BJ (cell line): ENCODE measurements at regions of chr1 and their contacts with region 1.

Region 1: DNA sequence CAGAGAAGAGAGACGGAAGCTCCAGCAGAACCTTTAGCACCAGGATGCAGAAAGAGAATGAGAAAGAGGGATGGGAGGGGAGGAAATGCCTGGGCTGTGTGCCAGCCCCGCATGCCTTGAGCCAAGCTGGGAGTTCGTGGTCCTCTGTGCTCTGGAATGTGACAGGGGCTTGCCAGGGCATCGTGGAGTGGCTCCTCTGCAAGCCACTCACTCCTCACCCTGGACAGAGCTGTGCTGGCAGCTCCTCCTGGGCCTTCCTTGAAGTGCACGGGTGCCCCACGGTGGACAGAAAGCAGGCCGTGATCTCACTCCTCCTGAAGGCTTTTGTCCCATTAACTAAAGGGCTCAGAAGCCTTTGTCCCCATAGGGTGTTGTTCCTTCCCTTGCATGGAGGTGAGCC is 34.8 kb upstream of the PRELP start:
- DNase-seq: no peak
- H3K4me3 ChIP-seq: no peak overlapping the region
- H3K27me3 ChIP-seq: no peaks in the 10 kb centered on the region
- CTCF ChIP-seq: peak; percentile 68

Region 2: GRCh38 chr1:203368624-203369451 is 71.9 kb before region 1 on chr1:
- CTCF ChIA-PET with region 1: interaction called, 39 read pairs
- POLR2A ChIA-PET with region 1: no interaction called
- DNase-seq: peak; percentile 61
- H3K4me3 ChIP-seq: no peak overlapping the region
- H3K27me3 ChIP-seq: peaks cover 7% of the 10 kb centered on the region
- CTCF ChIP-seq: peak; percentile 59

Region 3: DNA sequence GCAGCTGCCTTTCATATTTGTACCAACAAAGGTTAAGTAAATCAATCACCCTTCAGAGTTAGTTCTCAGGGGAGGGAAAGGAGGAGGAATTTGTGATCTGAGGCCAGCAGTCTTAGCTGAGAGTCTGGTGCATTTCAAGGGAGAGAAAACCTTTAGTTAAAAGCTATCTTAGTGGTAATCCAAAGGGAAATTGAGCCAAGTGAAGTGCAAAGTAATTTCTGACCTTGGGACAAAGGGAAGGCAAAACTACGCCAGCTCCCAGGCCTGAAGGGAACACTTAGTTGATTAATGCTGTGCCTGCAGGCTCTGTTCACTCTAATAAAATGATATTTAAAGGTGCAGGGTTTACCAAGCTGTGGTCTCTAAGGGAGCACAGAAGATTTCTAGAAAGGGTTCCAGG is 66.8 kb before region 1 on chr1:
- CTCF ChIA-PET with region 1: interaction called, 39 read pairs
- POLR2A ChIA-PET with region 1: no interaction called
- DNase-seq: no peak
- H3K4me3 ChIP-seq: no peak overlapping the region
- H3K27me3 ChIP-seq: peaks cover 1% of the 10 kb centered on the region; the same call in 1 of the 2 replicates
- CTCF ChIP-seq: no peak

Region 4: DNA sequence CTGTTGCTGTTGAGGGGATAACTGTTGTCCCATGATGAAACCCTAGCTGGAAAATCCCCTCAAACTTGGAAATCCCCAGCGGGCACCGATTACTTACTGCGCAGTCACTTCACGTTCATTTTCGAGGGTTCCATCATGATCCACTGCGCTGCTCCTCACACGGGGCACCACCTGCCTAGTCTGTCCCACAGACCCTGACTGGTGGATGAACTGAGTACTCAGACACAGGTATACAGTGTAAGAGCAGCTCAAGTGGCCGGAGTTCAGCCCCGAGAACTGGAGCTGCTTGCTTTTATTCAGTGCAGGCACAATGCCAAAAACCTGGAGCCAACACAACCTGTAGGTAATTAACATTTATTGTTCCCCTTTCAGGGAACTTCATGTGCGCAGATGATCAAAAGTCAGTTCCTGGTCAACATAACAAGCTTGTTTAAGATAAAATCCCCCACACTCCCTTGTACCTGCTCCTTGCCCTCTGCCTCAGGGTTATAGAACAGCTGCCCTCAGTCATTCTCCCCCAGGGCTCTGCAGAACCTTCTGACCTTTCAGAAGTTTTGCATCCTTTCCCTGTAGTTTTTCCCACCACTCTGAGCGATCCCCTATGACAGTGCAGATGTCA is 11.7 kb before region 1 on chr1:
- CTCF ChIA-PET with region 1: interaction called, 11 read pairs
- POLR2A ChIA-PET with region 1: no interaction called
- DNase-seq: no peak
- H3K4me3 ChIP-seq: no peak overlapping the region
- H3K27me3 ChIP-seq: peaks cover 20% of the 10 kb centered on the region
- CTCF ChIP-seq: no peak

Region 5: DNA sequence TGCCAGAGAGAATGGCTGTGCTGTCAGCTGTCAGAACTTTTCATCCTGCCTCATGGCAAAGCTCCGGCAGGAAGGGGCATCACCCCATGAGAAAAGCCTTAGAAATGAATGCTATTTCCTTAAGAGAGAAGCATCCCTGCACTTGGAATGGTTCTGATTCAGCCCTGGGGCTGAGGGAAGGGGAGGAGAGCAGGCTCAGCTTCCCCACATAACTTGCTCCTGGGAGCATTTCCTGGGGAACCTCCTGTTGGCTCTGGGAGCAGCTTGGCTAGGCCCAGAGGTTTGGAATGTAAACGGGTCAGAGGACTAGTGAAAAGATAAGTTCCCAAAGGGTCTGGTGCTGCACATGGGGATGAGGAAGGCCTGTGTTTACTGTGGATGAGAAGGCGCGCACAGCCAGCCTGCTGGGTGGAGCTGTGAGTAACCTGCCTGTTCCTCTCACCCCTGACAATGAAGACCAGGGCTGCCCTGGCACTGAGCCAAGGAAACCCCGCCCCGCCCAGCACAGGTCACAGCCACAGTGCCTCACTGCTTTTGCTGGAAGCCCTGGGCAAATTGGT is 39.8 kb after region 1 on chr1:
- CTCF ChIA-PET with region 1: interaction called, 60 read pairs
- POLR2A ChIA-PET with region 1: no interaction called
- DNase-seq: peak; percentile 96
- H3K4me3 ChIP-seq: no peak overlapping the region
- H3K27me3 ChIP-seq: no peaks in the 10 kb centered on the region
- CTCF ChIP-seq: no peak

Region 6: DNA sequence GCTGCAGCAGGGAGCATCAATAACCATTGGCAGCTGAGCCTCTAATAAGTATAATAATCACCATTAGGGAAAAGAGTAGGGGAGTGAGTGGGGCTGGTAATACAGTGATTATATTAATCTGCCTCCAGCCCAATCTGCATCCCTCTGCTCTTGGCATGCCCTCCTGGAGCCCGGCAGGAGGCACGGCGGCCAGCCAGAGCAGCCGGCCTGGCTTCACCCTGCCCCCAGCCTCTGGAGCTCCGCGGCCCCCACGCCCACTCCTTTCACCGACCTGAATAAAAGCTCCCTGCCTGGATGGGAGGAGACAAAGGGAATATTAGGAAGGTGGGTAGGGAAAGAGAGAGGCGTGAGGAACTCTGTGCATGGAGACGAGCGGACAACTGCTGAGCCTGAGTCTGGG is 81.5 kb after region 1 on chr1:
- CTCF ChIA-PET with region 1: no interaction called
- POLR2A ChIA-PET with region 1: no interaction called
- DNase-seq: no peak
- H3K4me3 ChIP-seq: no peak overlapping the region
- H3K27me3 ChIP-seq: no peaks in the 10 kb centered on the region; the same call in 1 of the 2 replicates
- CTCF ChIP-seq: no peak